Activated naive CD4-positive, alpha-beta T cell treated with anti-CD3 and anti-CD28 coated beads for 36 hours (primary cell): ENCODE measurements at regions of chr12 and their contacts with region 1.

Region 1: DNA sequence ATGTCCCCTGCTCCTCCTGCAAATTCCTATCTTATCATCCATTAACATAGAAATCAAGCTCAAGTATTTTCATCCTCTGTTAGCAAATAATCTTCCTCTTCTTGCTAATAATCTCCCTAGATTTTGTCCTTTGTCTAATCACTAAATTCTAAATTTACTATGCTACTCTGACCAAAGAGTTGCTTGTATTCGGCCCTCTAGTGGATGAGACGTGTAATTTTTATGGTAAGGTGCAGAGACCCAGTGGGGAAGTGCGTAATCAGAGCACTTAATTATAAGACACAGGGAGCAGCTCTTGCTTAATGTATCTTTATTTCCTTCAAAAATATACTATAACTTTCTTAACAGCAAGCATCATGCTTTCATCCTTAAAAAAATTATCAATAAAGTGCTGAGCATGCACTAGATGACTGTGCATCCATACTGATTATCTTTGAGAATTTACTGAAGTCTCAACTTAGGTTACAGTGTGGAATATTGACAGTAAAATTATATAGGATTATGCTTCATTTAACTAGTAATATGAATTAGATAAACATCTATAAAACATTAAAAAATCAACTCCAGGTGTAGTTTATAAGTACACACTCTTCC is 212.6 kb downstream of the SLC16A7 start:
- DNase-seq: no peak
- H3K4me3 Mint-ChIP-seq: no peak overlapping the region
- H3K27ac Mint-ChIP-seq: no peak overlapping the region
- H3K4me1 Mint-ChIP-seq: no peaks in the 10 kb centered on the region
- H3K27me3 Mint-ChIP-seq: no peaks in the 10 kb centered on the region

Region 2: DNA sequence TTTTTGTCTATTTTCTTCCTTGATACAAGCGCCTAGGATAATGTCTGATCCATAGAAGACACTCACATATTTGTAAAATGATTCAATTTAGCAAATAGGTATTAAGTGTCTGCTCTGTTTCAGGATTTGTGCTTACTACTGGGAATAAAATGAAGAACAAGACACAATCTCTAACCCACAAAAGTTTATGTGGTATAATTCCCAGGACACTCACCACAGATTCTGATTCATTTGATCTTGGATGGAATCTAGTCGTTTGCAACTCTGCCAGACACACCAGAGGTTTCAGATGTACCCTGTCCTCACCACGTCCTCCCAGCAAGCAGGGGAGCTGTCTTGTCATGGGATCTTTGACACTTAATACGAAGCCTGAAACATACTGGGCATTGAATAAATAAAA is 1096.4 kb before region 1 on chr12:
- CTCF ChIA-PET with region 1: no interaction called
- intact Hi-C with region 1: no loop called
- DNase-seq: no peak
- H3K4me3 Mint-ChIP-seq: no peak overlapping the region
- H3K27ac Mint-ChIP-seq: no peak overlapping the region
- H3K4me1 Mint-ChIP-seq: no peaks in the 10 kb centered on the region
- H3K27me3 Mint-ChIP-seq: no peaks in the 10 kb centered on the region

Region 3: DNA sequence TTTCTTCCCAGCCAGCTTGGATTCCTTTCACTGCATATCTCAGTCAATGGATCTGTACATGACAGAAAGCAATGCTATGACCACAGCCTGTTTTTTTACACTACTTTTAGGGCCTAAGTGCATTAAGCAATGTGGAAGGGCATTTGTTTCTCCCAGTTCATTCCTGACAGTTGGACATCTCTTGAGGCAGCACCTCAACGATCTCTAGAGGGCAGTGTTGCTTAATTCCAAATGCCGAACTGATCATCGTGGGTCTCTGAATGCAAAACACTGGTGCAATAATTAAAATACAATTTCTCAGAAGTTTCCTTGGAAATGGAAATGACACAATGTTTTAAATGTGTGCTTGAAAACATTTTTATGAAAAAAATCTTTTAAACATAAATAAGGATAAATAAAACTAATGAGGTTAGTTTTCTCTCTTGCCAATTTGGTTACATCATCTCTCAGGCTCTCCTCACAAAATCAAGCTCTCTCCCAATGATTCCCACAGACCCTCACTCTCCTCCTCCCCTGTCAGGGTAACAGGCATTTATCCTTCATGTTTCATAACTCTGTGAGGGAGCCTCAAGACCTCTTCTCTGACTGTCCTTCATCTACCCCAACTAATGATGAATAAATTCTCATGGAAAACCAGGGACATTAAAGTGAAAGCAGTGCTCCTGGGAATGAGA is 405.0 kb before region 1 on chr12:
- CTCF ChIA-PET with region 1: interaction called, 10 read pairs
- intact Hi-C with region 1: loop called (anchors 1 kb)
- DNase-seq: peak; percentile 54
- H3K4me3 Mint-ChIP-seq: no peak overlapping the region
- H3K27ac Mint-ChIP-seq: no peak overlapping the region
- H3K4me1 Mint-ChIP-seq: peaks cover 9% of the 10 kb centered on the region
- H3K27me3 Mint-ChIP-seq: no peaks in the 10 kb centered on the region

Region 4: GRCh38 chr12:59431266-59431665 is 377.1 kb before region 1 on chr12:
- CTCF ChIA-PET with region 1: interaction called, 4 read pairs
- intact Hi-C with region 1: loop called (anchors 1 kb)
- DNase-seq: no peak
- H3K4me3 Mint-ChIP-seq: no peak overlapping the region
- H3K27ac Mint-ChIP-seq: no peak overlapping the region
- H3K4me1 Mint-ChIP-seq: no peaks in the 10 kb centered on the region
- H3K27me3 Mint-ChIP-seq: peaks cover 2% of the 10 kb centered on the region

Region 5: GRCh38 chr12:59444932-59445331 is 363.5 kb before region 1 on chr12:
- CTCF ChIA-PET with region 1: interaction called, 6 read pairs
- intact Hi-C with region 1: loop called (anchors 1 kb)
- DNase-seq: peak; percentile 36
- H3K4me3 Mint-ChIP-seq: no peak overlapping the region
- H3K27ac Mint-ChIP-seq: no peak overlapping the region
- H3K4me1 Mint-ChIP-seq: no peaks in the 10 kb centered on the region
- H3K27me3 Mint-ChIP-seq: peaks cover 19% of the 10 kb centered on the region

Region 6: GRCh38 chr12:59587710-59588109 is 220.7 kb before region 1 on chr12:
- CTCF ChIA-PET with region 1: interaction called, 3 read pairs
- intact Hi-C with region 1: loop called (anchors 2 kb)
- DNase-seq: no peak
- H3K4me3 Mint-ChIP-seq: no peak overlapping the region
- H3K27ac Mint-ChIP-seq: no peak overlapping the region
- H3K4me1 Mint-ChIP-seq: peaks cover 5% of the 10 kb centered on the region
- H3K27me3 Mint-ChIP-seq: no peaks in the 10 kb centered on the region

Region 7: GRCh38 chr12:59736822-59737221 is 71.6 kb before region 1 on chr12:
- CTCF ChIA-PET with region 1: no interaction called
- intact Hi-C with region 1: no loop called
- DNase-seq: no peak
- H3K4me3 Mint-ChIP-seq: no peak overlapping the region
- H3K27ac Mint-ChIP-seq: no peak overlapping the region
- H3K4me1 Mint-ChIP-seq: peaks cover 6% of the 10 kb centered on the region
- H3K27me3 Mint-ChIP-seq: no peaks in the 10 kb centered on the region

Region 8: GRCh38 chr12:59861635-59862034 is 53.2 kb after region 1 on chr12:
- CTCF ChIA-PET with region 1: no interaction called
- intact Hi-C with region 1: no loop called
- DNase-seq: no peak
- H3K4me3 Mint-ChIP-seq: no peak overlapping the region
- H3K27ac Mint-ChIP-seq: no peak overlapping the region
- H3K4me1 Mint-ChIP-seq: no peaks in the 10 kb centered on the region
- H3K27me3 Mint-ChIP-seq: peaks cover 2% of the 10 kb centered on the region